ENCODE measurements at regions of chr11 and their contacts with region 1.

Region 1: DNA sequence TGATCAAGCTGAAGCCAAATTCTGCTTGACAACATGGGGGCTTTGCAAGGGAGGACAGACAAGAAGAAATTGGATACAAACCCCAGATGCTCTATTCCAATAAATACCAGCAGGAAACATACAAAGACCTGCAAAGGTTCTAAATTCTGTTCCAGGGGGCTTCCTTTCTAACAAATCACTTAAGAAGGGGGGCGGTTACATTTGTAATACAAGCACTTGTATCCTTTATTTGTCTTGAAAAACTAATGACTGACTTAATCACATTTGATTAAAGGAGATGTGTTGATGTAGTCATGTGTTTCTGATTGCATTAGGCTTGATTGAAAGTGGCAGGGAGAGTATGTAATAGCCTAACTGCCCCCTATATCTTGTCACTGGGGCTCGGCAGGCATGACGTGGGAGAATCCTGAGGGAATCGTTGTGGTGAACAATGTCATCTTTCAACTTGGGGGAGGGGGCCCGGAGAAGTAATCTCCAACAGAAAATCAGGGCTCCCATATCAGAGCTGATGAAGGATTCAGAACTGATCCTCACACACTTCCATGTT is 361.7 kb downstream of the INSC start:
- DNase-seq: no peak
- H3K4me3 ChIP-seq: no peak overlapping the region
- H3K27ac ChIP-seq: no peak overlapping the region
- H3K4me1 ChIP-seq: no peaks in the 10 kb centered on the region
- CTCF ChIP-seq: no peak

Region 2: DNA sequence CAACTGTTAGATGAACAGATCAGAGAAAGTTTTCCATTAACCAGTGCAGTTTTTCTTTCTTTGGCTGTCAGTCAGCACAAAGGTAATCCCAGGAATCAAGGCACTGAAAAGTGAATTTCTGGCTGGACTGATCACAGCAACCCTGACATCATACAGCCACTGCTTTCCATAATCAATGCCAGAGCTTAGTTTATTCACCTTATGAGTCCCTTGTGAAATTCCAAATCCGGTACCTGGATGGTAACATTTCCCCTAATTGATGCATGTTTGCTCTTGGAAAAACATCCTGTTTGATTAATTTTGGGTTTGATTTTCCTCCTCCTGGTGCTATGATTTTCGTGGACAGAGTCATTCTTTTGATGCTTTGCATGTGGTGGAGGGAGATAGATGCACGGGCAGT is 41.9 kb before region 1 on chr11:
- CTCF ChIA-PET with region 1: no interaction called
- POLR2A ChIA-PET with region 1: no interaction called
- intact Hi-C with region 1: no loop called
- DNase-seq: no peak
- H3K4me3 ChIP-seq: no peak overlapping the region
- H3K27ac ChIP-seq: no peak overlapping the region
- H3K4me1 ChIP-seq: no peaks in the 10 kb centered on the region
- CTCF ChIP-seq: no peak

Region 3: GRCh38 chr11:15497366-15497765 is 20.9 kb after region 1 on chr11:
- CTCF ChIA-PET with region 1: no interaction called
- POLR2A ChIA-PET with region 1: no interaction called
- intact Hi-C with region 1: no loop called
- DNase-seq: no peak
- H3K4me3 ChIP-seq: no peak overlapping the region
- H3K27ac ChIP-seq: no peak overlapping the region
- H3K4me1 ChIP-seq: no peaks in the 10 kb centered on the region
- CTCF ChIP-seq: no peak

Region 4: DNA sequence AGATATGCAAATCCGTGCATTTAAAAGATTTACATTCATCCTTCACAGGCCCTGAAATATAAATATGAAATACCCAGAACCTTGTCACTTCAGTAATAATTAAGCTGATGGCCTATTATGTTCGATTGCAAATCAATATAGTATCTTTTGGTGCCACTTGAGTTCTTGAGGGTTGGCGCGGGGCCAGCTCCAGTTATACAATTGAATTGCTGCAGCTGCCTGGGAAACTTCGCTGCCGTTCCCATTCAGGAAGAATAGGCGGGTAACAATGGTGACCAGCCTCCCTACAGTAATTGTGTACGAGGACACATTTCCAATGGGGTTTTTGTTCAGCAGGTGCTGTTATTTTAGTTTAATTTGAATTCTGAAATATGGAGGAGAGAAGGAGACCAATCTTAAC is 89.4 kb after region 1 on chr11:
- CTCF ChIA-PET with region 1: no interaction called
- POLR2A ChIA-PET with region 1: interaction called, 17 read pairs
- intact Hi-C with region 1: no loop called
- DNase-seq: no peak
- H3K4me3 ChIP-seq: no peak overlapping the region
- H3K27ac ChIP-seq: no peak overlapping the region
- H3K4me1 ChIP-seq: no peaks in the 10 kb centered on the region
- CTCF ChIP-seq: no peak

Measured in OCI-LY7 (cell line).